Right cardiac atrium (tissue), 5 donors: ENCODE measurements at regions of chr12 and their contacts with region 1.

Region 1: GRCh38 chr12:60494244-60494643 is 898.4 kb downstream of the SLC16A7 start:
- DNase-seq: no peak
- ATAC-seq: no peak
- H3K4me3 ChIP-seq: no peak overlapping the region
- H3K27ac ChIP-seq: no peak overlapping the region
- H3K4me1 ChIP-seq: no peaks in the 10 kb centered on the region
- H3K27me3 ChIP-seq: no peaks in the 10 kb centered on the region

Region 2: DNA sequence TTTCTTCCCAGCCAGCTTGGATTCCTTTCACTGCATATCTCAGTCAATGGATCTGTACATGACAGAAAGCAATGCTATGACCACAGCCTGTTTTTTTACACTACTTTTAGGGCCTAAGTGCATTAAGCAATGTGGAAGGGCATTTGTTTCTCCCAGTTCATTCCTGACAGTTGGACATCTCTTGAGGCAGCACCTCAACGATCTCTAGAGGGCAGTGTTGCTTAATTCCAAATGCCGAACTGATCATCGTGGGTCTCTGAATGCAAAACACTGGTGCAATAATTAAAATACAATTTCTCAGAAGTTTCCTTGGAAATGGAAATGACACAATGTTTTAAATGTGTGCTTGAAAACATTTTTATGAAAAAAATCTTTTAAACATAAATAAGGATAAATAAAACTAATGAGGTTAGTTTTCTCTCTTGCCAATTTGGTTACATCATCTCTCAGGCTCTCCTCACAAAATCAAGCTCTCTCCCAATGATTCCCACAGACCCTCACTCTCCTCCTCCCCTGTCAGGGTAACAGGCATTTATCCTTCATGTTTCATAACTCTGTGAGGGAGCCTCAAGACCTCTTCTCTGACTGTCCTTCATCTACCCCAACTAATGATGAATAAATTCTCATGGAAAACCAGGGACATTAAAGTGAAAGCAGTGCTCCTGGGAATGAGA is 1090.8 kb before region 1 on chr12:
- intact Hi-C with region 1: loop called in 1 of 4 experiments (anchors 10 kb)
- DNase-seq: peak in 1 of 3 donors; percentile 11
- ATAC-seq: peak; percentile 76 to 78
- H3K4me3 ChIP-seq: no peak overlapping the region
- H3K27ac ChIP-seq: no peak overlapping the region
- H3K4me1 ChIP-seq: no peaks in the 10 kb centered on the region
- H3K27me3 ChIP-seq: no peaks in the 10 kb centered on the region

Region 3: DNA sequence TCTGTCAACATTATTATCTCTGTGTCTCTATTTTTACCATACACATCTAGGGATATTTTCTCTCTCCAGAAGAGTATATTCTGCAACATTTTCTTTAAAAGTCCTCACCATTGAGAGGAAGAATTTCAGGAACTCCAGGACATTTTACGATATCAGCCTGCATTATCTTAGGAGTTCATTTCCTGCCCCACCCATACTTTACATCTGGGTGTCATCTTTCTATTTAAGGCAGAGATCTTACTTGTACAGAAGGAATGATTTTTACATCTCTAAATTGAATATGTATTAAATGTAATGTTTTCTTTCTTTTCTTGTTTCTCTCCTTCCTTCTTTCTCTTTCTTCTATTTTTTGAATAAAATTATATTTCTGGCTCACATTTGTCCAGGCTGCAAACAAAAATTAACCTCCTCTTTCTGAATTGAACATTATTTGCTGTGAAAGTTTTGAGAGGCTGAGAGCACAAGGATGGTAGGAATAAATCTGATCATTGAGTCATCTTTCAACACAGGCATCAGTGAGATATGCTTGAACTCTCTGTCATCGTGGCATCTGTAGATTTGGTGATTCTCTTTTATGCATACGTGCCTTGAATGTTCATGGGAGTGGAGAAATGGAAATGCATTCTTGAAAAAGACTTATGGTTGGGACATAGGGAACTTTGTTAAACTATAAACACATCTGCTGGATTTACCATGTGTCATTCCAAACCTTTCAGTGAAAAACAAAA is 144.8 kb before region 1 on chr12:
- intact Hi-C with region 1: no loop called
- DNase-seq: no peak
- ATAC-seq: no peak
- H3K4me3 ChIP-seq: no peak overlapping the region
- H3K27ac ChIP-seq: no peak overlapping the region
- H3K4me1 ChIP-seq: no peaks in the 10 kb centered on the region
- H3K27me3 ChIP-seq: no peaks in the 10 kb centered on the region